Colonic mucosa (tissue), 4 donors: ENCODE measurements at regions of chr1 and their contacts with region 1.

Region 1: GRCh38 chr1:156738407-156738806 is 2.5 kb downstream of the MRPL24 start:
- DNase-seq: no peak
- H3K4me3 ChIP-seq: no peak overlapping the region
- H3K27ac ChIP-seq: no peak overlapping the region
- H3K4me1 ChIP-seq: no peaks in the 10 kb centered on the region
- H3K27me3 ChIP-seq: no peaks in the 10 kb centered on the region
- CTCF ChIP-seq: no peak

Region 2: DNA sequence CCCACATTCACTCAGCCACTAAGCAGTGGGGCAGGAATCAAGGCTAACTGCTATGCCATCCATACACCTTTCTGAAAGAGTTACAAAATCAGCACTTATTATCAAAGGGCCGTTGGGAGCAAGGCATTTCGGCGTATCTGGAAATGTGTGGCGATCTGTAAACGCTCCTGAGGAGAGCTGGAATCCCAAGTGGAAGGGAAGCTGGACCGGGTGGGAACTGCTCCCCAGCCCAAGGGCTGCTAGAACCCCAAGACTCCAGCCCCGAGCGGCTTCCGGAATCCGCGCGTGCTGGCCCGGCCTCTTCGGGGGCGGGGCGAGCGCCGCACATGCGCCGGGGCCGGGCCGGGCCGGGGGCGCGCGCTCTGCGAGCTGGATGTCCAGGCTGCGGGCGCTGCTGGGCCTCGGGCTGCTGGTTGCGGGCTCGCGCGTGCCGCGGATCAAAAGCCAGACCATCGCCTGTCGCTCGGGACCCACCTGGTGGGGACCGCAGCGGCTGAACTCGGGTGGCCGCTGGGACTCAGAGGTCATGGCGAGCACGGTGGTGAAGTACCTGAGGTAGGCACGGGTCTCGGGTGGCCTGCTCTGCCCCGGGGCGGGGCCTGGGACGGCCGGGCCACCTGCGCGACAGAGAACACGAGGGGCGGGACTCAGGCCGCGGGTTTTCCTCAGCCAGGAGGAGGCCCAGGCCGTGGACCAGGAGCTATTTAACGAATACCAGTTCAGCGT is 146.8 kb before region 1 on chr1 and contains the start of gene NAXE:
- intact Hi-C with region 1: no loop called
- DNase-seq: peak; percentile 80
- H3K4me3 ChIP-seq: peak within 1 kb of the TSS; percentile 56
- H3K27ac ChIP-seq: peak within 1 kb of the TSS; percentile 84
- H3K4me1 ChIP-seq: no peaks in the 10 kb centered on the region
- H3K27me3 ChIP-seq: no peaks in the 10 kb centered on the region
- CTCF ChIP-seq: no peak
- total RNA-seq, gene NAXE: 68.4 to 99.8 TPM

Region 3: DNA sequence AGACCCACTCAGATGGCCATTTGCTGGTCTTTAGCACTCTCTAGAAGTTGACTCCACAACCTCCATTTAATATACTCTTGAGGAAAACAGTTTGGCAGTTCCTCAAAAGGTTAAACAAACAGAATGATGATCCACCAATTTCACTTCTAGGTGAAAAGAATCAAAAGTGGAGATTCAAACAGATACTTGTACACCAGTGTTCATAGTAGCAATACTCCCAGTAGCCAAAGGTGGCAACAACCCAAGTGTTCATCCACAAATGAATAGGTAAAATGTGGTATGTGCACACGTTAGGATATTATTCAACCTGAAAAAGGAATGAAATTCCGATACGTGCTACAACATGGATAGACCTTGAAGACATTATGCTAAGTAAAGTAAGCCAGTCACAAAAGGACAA is 35.2 kb after region 1 on chr1:
- intact Hi-C with region 1: loop called (anchors 5 kb)
- DNase-seq: no peak
- H3K4me3 ChIP-seq: no peak overlapping the region
- H3K27ac ChIP-seq: no peak overlapping the region
- H3K4me1 ChIP-seq: peaks cover 12% of the 10 kb centered on the region
- H3K27me3 ChIP-seq: no peaks in the 10 kb centered on the region
- CTCF ChIP-seq: no peak